ENCODE measurements at regions of chr2 and their contacts with region 1.

Region 1: GRCh38 chr2:25131567-25132298 is 36.6 kb downstream of the POMC start:
- DNase-seq: no peak
- H3K4me3 ChIP-seq: peak overlapping the region in 1 of 2 donors; percentile 18
- H3K27ac ChIP-seq: no peak overlapping the region
- H3K4me1 ChIP-seq: no peaks in the 10 kb centered on the region
- H3K27me3 ChIP-seq: no peaks in the 10 kb centered on the region
- CTCF ChIP-seq: no peak
- POLR2A ChIP-seq: no peak

Region 2: GRCh38 chr2:24977631-24978030 is 154.1 kb before region 1 on chr2:
- intact Hi-C with region 1: loop called (anchors 5 kb)
- DNase-seq: no peak
- H3K4me3 ChIP-seq: no peak overlapping the region
- H3K27ac ChIP-seq: no peak overlapping the region
- H3K4me1 ChIP-seq: no peaks in the 10 kb centered on the region
- H3K27me3 ChIP-seq: no peaks in the 10 kb centered on the region
- CTCF ChIP-seq: no peak
- POLR2A ChIP-seq: no peak

Region 3: GRCh38 chr2:25632396-25632795 is 500.7 kb after region 1 on chr2:
- intact Hi-C with region 1: no loop called
- DNase-seq: no peak
- H3K4me3 ChIP-seq: no peak overlapping the region
- H3K27ac ChIP-seq: no peak overlapping the region
- H3K4me1 ChIP-seq: no peaks in the 10 kb centered on the region
- H3K27me3 ChIP-seq: no peaks in the 10 kb centered on the region
- CTCF ChIP-seq: no peak
- POLR2A ChIP-seq: no peak